ENCODE measurements at regions of chr10 and their contacts with region 1.

Region 1: GRCh38 chr10:132331526-132332432 is at the start of gene LRRC27:
- DNase-seq: peak; percentile 98 to 100 (median 100)
- H3K4me3 ChIP-seq: peak within 1 kb of the TSS; percentile 79 to 95
- H3K4me3 Mint-ChIP-seq: peak within 1 kb of the TSS; percentile 85 to 94 (median 90)
- H3K27ac ChIP-seq: peak within 1 kb of the TSS; percentile 77
- H3K27ac Mint-ChIP-seq: peak within 1 kb of the TSS; percentile 80 to 97 (median 95)
- H3K4me1 ChIP-seq: peaks cover 39% of the 10 kb centered on the region
- H3K4me1 Mint-ChIP-seq: peaks cover 27 to 75% (median 48%) of the 10 kb centered on the region in 4 donors
- H3K27me3 ChIP-seq: no peaks in the 10 kb centered on the region
- H3K27me3 Mint-ChIP-seq: peaks cover 0 to 1% of the 10 kb centered on the region in 2 donors
- total RNA-seq, gene LRRC27: 3.7 to 3.8 TPM

Region 2: GRCh38 chr10:132185601-132186487 is 145.9 kb before region 1 on chr10:
- CTCF ChIA-PET with region 1: no interaction called
- POLR2A ChIA-PET with region 1: no interaction called
- intact Hi-C with region 1: loop called (anchors 10 kb)
- DNase-seq: peak; percentile 58 to 77 (median 73)
- H3K4me3 ChIP-seq: peak overlapping the region in 1 of 2 donors; percentile 19
- H3K4me3 Mint-ChIP-seq: peak overlapping the region in 5 of 8 donors; percentile 28 to 75 (median 68)
- H3K27ac ChIP-seq: no peak overlapping the region
- H3K27ac Mint-ChIP-seq: peak overlapping the region in 3 of 7 donors; percentile 38 to 84 (median 63)
- H3K4me1 ChIP-seq: peaks cover 15% of the 10 kb centered on the region
- H3K4me1 Mint-ChIP-seq: peaks cover 0 to 13% (median 8%) of the 10 kb centered on the region in 4 donors
- H3K27me3 ChIP-seq: peaks cover 26% of the 10 kb centered on the region
- H3K27me3 Mint-ChIP-seq: peaks cover 37 to 43% of the 10 kb centered on the region in 2 donors

Region 3: DNA sequence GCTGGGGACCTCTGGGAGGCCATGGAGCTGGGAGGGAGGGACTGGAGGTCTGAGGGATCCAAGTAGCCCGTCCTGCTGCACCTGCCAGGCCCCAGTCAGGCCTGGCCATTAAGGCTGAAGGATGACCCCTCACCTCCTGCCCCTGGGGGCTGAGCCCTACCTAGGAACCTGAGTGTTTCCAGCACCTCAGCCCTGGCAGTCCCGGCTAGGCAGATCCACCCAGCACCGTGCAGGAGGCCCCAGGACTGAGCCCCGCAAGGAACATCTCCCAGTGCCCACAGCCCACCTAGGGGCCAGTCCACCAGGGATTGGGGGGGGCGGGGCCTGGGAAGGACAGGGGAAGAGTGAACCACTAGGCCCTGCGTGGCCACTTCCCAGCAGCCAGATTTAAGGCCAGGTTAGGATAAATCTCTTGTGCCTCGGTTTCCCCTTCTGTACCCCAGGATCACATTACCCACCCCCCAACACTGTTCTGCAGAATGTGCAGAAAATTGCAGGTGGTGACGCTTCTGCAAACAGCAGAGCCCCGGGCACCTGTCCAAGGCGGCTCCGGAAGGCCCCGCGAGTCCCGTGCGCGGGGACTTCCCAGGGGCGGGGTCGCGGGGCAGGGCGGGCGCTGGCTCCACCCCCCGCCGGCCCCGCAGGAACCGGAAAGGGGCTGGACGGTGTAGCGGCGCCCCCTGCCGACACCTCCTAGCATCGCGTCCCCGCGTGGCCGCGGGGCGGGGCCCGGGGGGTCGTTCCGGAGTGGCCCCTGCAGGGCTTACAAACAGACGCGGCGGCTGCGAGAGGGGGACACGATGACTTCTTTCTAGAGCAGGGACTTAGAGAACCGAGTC is 121.1 kb after region 1 on chr10:
- CTCF ChIA-PET with region 1: no interaction called
- POLR2A ChIA-PET with region 1: no interaction called
- intact Hi-C with region 1: loop called (anchors 2 kb)
- DNase-seq: peak; percentile 91 to 92 (median 91)
- H3K4me3 ChIP-seq: peak overlapping the region in 1 of 2 donors; percentile 32
- H3K4me3 Mint-ChIP-seq: peak overlapping the region in 6 of 8 donors; percentile 45 to 79 (median 56)
- H3K27ac ChIP-seq: peak overlapping the region; percentile 86
- H3K27ac Mint-ChIP-seq: peak overlapping the region; percentile 83 to 98 (median 95)
- H3K4me1 ChIP-seq: peaks cover 31% of the 10 kb centered on the region
- H3K4me1 Mint-ChIP-seq: peaks cover 6 to 37% (median 15%) of the 10 kb centered on the region in 4 donors
- H3K27me3 ChIP-seq: no peaks in the 10 kb centered on the region
- H3K27me3 Mint-ChIP-seq: no peaks in the 10 kb centered on the region

Region 4: DNA sequence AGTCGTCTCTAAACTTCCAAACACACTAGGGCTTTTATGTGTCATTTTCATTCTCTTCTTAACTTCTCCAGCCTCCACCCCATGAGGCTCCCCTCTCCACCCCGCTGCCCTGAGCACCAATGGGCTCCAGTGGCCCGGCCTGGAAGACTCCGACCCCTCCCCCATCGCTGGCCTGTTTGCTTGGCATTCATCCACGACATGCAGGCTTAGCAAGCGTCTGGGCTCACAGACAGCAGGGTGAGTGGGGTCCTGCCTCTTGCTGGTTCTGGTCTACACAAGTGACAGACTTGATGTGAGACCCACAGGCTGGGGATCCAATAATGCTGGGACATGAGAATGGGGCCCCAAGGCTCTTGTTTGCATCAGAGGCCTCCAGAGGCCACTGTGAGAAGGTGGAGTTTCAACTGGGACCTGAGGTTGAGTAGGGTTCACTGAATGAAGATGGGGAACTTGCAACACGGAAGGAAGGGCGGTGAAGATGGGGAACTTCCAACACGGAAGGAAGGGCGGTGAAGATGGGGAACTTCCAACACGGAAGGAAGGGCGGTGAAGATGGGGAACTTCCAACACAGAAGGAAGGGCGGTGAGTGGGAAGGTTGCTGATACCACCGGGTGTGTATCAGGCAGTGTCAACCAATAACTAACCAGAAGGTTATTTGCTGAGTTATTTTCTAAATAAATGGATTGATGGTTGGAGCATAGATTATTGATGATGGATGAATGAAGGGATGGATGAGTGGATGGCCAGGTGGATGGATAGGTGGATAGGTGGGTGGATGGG is 842.3 kb after region 1 on chr10:
- CTCF ChIA-PET with region 1: no interaction called
- POLR2A ChIA-PET with region 1: no interaction called
- intact Hi-C with region 1: no loop called
- DNase-seq: no peak
- H3K4me3 ChIP-seq: no peak overlapping the region
- H3K4me3 Mint-ChIP-seq: no peak overlapping the region
- H3K27ac ChIP-seq: no peak overlapping the region
- H3K27ac Mint-ChIP-seq: no peak overlapping the region
- H3K4me1 ChIP-seq: no peaks in the 10 kb centered on the region
- H3K4me1 Mint-ChIP-seq: peaks cover 0 to 9% (median 2%) of the 10 kb centered on the region in 4 donors
- H3K27me3 ChIP-seq: no peaks in the 10 kb centered on the region
- H3K27me3 Mint-ChIP-seq: peaks cover 0 to 7% of the 10 kb centered on the region in 2 donors